ENCODE measurements at regions of chr19 and their contacts with region 1.

Region 1: DNA sequence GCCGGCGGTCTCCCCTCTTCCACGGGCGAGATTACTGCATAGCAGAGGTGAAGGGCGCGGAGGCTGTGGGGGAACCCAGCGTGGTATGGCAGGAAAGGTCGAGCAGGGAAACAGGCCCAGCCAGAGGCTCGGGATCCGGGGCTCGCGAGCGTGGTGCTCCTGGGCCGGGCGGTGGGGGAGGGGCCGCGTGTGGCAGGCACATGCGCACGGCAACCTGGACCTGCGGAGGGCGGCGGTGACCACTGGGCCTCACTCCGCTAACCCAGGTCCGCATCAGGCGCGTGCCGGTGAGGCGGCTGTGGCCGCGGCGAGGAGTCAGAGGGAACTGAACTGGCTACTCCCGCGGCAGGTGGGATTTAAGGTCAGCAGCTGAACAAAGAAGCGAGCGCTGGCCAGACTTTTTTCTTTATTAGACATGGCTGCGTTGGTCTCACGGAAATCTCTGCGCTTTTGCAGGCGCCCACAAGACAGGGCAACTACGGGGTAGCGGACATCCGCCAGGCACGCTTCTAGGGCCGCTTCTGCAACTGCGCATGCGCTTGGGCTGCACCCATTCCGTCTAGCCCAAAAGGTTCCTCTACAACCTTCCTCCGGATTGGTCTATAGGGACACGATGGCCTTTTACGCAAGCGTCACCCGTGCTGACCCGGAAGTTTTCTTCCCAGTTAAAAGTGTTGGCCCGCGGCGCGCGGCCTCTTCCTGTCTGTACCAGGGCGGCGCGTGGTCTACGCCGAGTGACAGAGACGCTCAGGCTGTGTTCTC is at the start of gene RPS5:
- DNase-seq: peak; percentile 87 to 98
- H3K4me3 ChIP-seq: peak within 1 kb of the TSS; percentile 81 to 84
- H3K27ac ChIP-seq: peak within 1 kb of the TSS; percentile 87 to 96
- H3K4me1 ChIP-seq: peaks cover 10 to 31% of the 10 kb centered on the region in 2 donors
- H3K27me3 ChIP-seq: no peaks in the 10 kb centered on the region
- CTCF ChIP-seq: no peak
- total RNA-seq, gene RPS5: 1,483 TPM

Region 2: DNA sequence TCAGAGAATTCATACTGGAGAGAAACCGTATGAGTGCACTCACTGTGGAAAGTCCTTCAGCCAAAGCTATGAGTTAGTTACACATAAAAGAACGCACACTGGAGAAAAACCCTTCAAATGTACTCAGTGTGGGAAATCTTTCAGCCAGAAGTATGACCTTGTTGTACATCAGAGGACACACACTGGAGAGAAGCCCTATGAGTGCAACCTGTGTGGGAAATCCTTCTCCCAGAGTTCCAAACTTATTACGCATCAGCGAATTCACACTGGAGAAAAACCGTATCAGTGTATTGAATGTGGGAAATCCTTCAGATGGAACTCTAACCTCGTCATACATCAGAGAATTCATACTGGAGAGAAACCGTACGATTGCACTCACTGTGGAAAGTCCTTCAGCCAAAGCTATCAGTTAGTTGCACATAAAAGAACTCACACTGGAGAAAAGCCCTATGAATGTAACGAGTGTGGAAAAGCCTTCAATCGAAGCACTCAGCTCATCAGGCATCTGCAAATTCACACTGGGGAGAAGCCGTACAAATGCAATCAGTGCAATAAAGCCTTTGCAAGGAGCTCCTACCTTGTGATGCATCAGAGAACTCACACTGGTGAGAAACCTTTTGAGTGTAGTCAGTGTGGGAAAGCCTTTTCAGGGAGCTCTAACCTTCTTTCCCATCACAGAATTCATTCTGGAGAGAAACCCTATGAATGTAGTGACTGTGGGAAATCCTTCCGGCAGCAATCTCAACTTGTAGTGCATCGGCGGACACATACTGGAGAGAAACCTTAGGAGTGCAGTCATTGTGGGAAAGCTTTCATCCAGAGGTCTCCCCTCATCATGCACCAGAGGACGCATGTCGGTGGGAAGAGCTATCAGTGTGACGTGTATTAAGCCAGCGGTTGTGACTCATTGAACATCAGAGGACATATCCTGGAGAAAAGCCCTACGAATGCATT is 124.5 kb before region 1 on chr19:
- intact Hi-C with region 1: no loop called
- DNase-seq: no peak
- H3K4me3 ChIP-seq: peak overlapping the region in 1 of 2 donors; percentile 26
- H3K27ac ChIP-seq: no peak overlapping the region
- H3K4me1 ChIP-seq: no peaks in the 10 kb centered on the region
- H3K27me3 ChIP-seq: no peaks in the 10 kb centered on the region
- CTCF ChIP-seq: no peak

Region 3: DNA sequence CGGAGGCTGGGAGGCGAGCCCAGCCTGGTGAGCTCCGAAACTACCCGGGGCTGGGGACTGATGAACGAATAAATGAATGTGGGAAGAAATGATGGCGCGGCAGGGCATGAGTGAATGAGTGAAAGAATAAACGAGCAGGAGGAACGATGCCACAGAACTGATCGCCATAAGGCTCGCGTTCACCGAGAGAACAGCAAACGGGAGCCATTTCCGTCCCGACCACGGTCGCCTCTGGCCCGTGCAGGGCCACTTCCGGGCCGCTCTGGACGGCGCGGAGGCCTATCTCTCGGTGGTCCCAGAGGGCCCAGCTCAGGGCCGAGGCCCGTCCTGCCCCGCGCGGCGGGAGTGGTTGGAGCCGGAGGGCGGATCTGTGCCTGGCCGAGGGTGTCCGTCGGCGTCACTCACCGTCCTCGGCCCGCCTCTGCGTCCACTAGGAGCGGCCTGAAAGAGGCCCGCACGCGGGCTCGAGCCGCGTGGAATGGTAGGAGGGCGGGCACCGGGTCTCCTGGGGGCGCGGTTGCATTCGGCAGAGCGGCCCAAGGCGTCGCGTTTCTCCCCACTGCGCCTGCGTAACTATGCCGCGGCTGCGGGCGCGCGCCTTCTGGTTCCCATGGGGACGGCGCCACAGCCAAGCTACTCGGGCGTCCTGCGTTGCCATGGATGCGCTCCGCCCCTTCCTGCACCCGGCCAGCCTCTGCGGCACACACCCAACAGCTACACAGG is 24.3 kb before region 1 on chr19 and contains the start of gene ZNF497:
- intact Hi-C with region 1: loop called (anchors 1 kb)
- DNase-seq: peak; percentile 78 to 97
- H3K4me3 ChIP-seq: peak within 1 kb of the TSS; percentile 67 to 74
- H3K27ac ChIP-seq: peak within 1 kb of the TSS; percentile 86 to 94
- H3K4me1 ChIP-seq: peaks cover 0 to 7% of the 10 kb centered on the region in 2 donors
- H3K27me3 ChIP-seq: no peaks in the 10 kb centered on the region
- CTCF ChIP-seq: no peak
- total RNA-seq, gene ZNF497: not detected

Region 4: DNA sequence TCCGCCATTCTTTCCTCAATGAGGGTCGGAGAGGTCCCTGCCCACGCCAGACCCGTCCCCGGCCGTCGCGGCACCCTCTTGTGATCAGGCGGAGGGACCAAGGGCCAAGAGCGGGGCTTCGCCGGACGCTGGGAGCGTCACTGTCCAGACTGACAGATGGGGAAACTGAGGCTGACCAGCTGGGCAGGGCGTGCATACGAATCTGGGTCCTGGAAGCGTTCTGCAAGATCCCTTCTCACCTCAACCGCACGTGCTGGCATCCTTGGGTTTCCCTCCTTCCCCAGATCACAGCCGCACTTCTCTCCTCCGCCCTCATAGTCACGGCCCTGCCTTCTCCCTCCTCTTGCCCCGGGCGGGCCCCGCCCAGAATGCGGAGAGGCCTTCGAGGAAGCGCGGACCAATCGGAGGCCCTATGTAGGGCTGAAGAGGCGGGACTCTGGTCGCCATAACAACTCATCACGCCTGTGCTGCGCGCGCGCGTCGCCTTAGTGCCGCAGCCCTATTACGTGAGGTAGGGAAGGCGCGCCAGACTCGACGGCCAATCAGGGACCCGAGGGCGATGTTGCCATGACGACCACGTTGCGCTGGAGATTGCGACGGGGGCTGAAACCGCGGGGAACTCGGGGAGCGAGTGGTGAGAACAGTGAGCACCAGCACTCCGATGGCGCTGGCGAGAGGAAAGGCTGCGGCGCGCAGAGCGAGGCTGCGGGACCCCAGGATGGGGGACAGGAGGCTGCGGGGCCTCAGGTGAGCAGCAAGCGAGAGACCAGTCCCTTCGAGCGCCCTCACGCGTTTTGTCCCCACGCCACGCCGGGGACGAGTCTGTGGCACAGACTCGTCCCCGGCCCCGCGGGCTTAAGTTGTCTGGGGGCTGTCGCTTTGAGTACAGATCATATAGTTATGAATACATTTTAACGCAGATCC is 14.4 kb after region 1 on chr19:
- intact Hi-C with region 1: loop called (anchors 1 kb)
- DNase-seq: peak; percentile 99
- H3K4me3 ChIP-seq: peak overlapping the region; percentile 66 to 67
- H3K27ac ChIP-seq: no peak overlapping the region
- H3K4me1 ChIP-seq: peaks cover 7 to 10% of the 10 kb centered on the region in 2 donors
- H3K27me3 ChIP-seq: no peaks in the 10 kb centered on the region
- CTCF ChIP-seq: peak in 1 of 3 experiments; percentile 30

Region 5: DNA sequence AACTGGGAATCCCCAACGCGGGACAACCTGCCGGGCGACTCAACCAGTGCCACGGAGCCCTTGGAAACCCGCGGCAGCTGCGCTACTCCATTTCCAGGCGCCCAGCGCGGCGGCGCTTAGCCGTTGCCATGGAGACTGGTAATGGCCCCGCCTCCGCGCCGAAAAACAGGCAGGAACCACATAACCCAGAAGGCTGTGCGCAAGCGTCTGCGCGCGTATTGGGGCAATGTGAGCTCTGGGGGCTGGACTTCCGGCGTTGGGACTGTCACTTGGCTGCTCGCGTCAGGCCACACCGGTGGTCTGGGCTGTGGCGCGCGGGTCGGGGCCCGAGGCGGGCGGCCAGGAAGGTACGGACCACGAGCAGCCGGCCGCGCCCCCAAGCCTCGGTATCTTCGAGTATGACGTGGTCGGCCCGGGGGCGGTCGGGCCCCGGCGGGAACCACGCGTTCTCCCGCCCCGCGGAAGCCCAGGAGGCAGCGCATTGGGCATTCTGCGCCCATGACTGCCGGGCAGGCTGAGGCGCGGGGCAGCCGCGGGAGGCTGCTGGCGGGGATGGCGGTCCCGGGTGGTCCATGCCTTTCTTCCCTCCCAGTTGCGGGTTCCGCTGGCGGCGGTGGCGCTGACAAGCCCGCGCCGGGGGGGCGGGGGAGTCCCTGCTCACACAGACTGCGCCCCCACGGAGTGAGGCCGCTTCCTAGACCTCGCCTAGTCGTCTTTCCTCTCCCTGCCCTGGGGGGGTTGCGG is 64.8 kb after region 1 on chr19 and contains the start of gene ZNF324B:
- intact Hi-C with region 1: loop called (anchors 2 kb)
- DNase-seq: peak; percentile 89 to 98
- H3K4me3 ChIP-seq: peak within 1 kb of the TSS; percentile 68 to 82
- H3K27ac ChIP-seq: peak within 1 kb of the TSS; percentile 35 to 54
- H3K4me1 ChIP-seq: no peaks in the 10 kb centered on the region
- H3K27me3 ChIP-seq: no peaks in the 10 kb centered on the region
- CTCF ChIP-seq: no peak
- total RNA-seq, gene ZNF324B: 2.2 TPM

Region 6: GRCh38 chr19:58466760-58467589 is 80.2 kb after region 1 on chr19 and contains the start of gene ZNF324:
- intact Hi-C with region 1: loop called (anchors 2 kb)
- DNase-seq: peak; percentile 93 to 99
- H3K4me3 ChIP-seq: peak within 1 kb of the TSS; percentile 95 to 96
- H3K27ac ChIP-seq: peak within 1 kb of the TSS; percentile 84 to 88
- H3K4me1 ChIP-seq: peaks cover 0 to 10% of the 10 kb centered on the region in 2 donors
- H3K27me3 ChIP-seq: no peaks in the 10 kb centered on the region
- CTCF ChIP-seq: no peak
- total RNA-seq, gene ZNF324: 2.1 TPM

Measured in ascending aorta (tissue), 2 donors.